Right ventricle myocardium inferior (tissue), 1 donor: ENCODE measurements at regions of chr3 and their contacts with region 1.

Region 1: DNA sequence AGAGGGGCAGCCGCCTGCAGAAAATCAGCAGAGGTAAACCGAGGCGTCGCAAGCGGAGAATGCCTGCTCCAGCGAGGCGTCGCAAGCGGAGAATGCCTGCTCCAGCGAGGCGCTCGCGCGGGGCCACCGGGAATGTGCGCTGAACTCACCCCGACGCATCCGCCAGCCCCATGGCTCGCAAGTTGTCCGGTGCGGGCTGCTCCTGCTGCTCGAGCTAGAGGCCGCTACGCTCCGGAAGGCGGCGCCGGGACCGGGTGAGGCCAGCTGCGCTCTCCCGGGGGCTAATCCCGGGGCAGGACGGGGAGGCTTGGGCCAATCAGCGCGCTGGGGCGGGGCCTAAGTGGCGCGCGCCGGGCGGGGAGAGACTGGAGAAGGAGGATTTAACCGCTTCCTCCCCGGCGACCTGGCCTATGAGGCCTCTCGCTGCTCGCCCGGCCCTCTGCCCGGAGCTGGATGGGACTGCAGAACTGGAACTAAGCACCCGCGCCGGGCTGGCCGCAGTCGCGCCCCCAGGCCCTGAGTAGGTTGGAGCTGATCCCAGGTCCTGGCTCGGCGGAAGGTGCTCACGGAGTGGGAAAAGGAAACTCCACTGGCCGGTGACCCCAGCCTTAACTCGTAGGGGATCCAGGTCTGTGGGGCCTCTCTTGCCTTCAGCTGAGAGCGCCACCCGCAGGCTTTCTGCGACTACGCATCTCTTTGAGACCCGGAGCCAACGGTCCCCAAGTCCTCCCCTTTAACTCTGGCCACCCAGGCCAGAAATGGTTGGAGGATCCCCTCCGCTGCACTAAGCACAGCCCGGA is at the start of gene SLC26A6:
- DNase-seq: peak; percentile 99
- ATAC-seq: peak; percentile 99
- total RNA-seq, gene SLC26A6: 14.1 TPM

Region 2: DNA sequence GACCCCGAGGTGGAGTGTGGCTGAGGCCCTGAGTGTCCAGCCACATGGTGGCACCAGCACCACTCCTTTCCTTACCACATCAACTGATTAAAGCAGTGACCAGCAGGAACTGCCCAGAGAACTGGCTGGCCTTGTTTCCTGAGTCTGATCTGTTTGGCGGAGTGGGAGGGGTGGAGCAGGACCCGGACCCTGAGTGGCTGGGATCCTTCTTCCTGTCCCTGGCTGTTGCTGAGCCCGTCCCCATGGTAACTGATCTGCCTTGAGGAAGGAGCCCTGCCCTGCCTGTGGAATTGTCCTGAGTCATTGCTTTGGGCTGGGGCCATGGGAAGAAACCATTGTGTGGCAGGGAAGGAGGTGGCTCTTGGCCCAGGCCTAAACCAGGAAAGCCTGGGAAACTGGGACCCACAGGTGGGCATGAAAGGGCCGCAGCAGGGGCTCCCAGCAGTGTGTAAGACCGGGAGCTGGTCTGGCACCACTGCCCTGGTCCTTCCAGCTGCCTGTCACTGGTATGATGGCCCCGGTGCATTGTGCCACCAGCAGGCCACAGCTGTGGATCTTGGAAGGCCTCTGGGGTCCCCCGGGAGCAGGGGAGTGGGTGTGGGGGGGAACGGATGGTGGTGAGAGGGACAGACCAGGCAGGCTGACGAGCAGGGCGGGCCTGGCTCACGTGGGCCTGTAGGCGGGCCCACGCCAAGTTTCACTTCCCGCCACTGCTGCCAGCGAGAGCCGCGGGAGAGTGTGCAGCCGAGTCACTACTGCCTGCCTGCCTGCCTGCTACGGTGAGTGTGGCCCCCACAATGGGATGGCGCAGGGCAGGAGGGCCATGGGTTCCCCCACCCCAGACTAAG is 169.7 kb before region 1 on chr3:
- intact Hi-C with region 1: no loop called
- DNase-seq: peak; percentile 97
- ATAC-seq: peak; percentile 95

Region 3: DNA sequence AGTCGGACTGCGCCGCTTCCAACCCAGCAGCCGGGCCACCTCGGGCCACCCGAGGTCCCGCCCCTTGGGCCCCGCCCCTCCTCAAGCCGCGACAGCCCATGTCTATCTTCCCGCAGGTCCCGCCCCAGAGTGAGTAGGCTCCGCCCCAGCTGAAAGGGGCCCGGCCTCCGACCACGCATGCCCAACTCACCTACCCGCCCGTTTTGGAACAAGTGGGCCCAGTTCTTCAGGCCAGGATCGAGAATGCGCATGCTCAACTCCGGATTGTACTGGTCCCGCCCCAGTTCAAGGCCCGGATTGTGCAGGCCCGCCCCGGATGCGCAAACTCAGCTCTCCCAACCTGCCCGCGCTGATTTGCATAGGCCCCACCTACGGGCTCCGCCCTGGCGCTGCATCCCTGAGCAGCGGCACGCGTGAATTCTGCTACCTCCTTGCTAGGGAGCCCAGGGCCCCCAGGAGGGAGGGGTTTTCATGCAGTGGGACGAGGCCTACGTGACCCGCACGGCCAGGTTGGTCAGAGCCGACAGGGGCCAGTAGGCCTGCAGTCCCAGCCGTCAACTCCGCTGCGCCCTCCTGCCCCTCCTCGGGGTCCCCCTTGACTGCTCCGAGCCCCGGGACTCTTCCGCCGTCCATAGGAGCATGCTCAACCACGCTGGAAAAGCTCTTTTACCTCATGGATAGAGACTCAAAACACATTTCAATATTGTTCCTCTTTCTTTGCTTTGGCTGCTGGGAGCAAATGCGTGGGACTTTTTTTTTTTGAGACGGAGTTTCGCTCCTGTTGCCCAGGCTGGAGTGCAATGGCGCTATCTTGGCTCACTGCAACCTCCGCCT is 78.4 kb before region 1 on chr3 and contains the start of gene PFKFB4:
- intact Hi-C with region 1: loop called (anchors 2 kb)
- DNase-seq: peak; percentile 99
- ATAC-seq: peak; percentile 94
- total RNA-seq, gene PFKFB4: 2.4 TPM

Region 4: DNA sequence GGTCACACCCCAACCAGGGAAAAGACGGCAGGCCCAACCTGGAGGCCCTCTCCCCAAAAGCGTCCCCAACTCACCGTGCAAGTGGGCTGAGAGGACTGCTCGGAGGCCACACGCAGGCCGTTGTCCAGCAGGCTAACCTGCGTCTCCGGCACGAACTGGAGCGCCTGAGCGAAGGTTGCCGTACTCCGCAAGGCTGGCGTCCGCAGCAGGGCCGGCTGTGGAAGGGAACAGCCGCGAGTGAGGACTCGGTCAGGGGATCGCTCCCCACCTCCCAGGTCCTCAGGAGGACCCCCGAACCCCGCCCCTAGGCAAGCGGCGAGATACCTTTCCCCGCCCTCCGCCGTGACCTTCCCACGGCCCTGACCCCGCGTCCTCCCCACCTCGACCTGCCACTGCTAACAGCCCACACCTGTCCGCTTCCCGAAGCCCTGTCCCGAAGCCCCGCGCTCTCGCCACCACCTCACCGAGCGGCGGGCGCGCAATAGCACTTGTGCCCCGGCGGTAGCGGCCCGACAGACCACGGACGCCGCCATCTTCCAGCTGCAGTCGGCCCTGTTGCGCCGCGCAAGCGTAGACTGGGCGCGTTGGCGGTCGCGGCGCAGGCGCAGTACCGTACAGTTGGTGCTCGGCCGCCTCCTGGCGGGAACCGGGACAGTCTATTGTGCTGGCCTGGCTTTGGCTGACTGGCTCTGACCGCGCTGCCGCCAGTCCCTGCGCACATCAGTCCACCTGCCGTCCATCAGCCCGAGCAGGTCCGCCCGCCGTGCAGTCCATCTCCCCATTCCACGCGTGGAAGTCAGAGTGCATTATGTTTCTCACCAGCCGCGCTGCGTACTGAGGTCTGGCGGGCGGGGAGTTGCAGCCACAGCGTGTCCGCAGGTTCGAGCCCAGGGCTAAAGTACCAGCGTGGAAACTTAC is 26.1 kb before region 1 on chr3 and contains the start of gene UQCRC1:
- intact Hi-C with region 1: loop called (anchors 2 kb)
- DNase-seq: peak; percentile 96
- ATAC-seq: peak; percentile 100
- total RNA-seq, gene UQCRC1: 1,186 TPM

Region 5: DNA sequence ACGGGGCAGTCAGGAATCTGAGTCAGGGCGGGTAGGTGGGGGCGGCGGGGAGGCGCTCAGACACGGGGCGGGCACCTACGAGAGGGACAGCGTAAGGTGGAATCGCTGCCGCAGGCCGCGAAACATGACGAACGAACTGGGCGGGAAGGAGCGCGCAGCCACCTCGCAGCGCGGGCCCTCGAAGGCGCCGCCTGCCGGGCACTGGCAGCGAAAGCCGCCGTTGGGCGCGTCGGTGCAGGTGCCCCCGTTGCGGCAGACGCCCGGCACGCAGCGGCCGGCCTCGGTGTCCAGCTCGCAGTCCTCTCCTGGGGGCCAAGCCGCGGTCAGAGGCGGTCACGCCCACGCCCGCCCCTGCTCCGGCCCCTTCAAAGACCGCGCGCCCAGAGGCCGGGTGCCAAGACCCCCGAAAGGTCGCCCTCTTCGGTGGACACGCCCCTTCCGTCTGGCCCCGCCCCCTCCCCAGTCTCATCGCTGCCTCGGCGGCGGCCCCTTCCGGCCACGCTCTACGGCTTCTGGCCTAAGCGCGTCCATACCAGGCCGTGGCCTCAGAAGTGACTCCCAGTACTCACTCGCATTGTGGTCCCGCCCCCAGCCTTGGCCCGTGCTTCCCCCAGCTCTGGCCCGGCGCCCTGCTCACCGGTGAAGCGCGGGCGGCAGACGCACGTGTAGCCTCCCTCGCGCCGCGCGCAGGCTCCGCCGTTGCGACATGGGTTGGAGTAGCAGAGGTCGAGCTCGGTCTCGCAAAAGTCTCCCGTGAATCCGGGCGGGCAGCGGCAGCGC is 20.8 kb after region 1 on chr3:
- intact Hi-C with region 1: loop called (anchors 1 kb)
- DNase-seq: peak; percentile 91
- ATAC-seq: peak; percentile 94

Region 6: DNA sequence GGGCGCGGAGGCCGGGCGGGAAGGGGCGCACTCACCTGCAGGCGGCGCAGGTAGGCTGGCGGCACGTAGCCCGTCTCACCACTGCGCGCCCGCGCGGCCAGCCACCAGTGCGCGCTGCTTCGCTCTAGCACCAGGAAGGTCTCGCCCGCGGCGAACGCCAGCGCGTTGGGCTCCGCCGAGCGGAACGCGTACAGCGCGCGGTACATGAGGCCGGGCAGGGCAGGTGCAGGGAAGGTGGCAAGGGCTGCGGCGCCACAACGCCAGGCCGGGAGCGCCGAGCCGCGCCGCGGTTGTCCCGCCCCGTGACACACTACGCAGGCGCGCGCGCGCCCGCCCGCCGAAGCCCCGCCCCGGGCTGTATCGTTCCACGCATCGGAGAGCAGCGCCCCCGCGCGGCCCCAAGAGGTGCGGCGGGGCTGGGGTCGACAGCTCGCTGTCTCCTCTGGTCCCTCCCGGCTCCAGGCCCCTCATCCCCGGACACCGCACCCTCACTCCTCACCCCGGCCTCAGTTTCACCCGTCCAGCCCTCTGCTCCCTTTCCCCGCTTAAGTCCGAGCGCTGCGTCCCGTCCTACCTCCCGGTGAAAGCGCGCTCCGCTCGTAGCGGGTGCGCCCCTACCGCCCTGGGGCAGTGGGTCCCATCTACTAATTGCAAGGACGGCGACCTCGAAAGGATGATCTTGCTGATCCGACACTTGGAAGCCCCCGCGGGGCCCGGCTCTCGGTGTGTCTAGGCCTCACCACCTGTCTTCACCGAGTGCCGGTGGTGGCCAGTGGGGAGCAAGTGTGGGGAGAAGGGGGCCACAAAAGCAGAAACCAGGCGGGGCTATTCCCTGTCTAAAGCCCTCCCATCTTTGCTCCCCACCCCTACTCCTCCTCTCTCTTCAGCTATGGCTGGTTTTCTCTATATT is 50.4 kb after region 1 on chr3 and contains the start of gene NCKIPSD:
- intact Hi-C with region 1: loop called (anchors 2 kb)
- DNase-seq: peak; percentile 98
- ATAC-seq: peak; percentile 94
- total RNA-seq, gene NCKIPSD: 15.4 TPM